GM12878 (cell line): ENCODE measurements at regions of chr11 and their contacts with region 1.

Region 1: DNA sequence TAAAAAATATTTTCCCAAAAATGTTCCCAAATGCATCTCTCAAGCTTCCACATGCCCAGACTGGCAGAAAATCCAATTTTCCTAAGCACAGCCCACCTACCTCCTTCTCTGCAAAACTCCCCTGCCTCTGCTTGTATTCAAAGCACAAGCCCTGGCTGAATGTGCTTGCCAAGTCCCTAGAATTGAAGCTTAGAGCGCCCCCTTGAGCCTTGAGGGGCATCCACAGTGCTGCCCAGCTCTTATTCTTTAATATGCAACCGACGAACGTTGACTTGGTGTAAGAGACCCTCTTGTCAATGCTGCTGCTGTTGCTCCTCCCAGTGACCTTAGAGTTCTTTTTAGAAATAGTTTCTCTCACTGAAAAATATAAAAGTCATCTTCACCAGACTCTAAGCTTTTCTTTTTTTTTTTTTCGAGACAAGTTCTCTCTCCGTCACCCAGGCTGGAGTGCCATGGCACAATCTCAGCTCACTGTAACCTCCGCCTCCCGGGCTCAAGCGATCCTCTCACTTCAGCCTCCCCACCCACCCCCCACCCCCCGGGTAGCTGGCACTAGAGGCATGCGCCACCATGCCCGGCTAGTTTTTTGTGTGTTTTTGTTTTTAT is 63.5 kb upstream of the CAPRIN1 start:
- DNase-seq: no peak
- ATAC-seq: peak; percentile 96
- H3K4me3 ChIP-seq: no peak overlapping the region
- H3K27ac ChIP-seq: no peak overlapping the region
- H3K4me1 ChIP-seq: no peaks in the 10 kb centered on the region
- H3K27me3 ChIP-seq: no peaks in the 10 kb centered on the region
- CTCF ChIP-seq: peak; percentile 74 to 77 (median 76)
- EP300 ChIP-seq: no peak
- POLR2A ChIP-seq: no peak
- RAD21 ChIP-seq: peak; percentile 85

Region 2: DNA sequence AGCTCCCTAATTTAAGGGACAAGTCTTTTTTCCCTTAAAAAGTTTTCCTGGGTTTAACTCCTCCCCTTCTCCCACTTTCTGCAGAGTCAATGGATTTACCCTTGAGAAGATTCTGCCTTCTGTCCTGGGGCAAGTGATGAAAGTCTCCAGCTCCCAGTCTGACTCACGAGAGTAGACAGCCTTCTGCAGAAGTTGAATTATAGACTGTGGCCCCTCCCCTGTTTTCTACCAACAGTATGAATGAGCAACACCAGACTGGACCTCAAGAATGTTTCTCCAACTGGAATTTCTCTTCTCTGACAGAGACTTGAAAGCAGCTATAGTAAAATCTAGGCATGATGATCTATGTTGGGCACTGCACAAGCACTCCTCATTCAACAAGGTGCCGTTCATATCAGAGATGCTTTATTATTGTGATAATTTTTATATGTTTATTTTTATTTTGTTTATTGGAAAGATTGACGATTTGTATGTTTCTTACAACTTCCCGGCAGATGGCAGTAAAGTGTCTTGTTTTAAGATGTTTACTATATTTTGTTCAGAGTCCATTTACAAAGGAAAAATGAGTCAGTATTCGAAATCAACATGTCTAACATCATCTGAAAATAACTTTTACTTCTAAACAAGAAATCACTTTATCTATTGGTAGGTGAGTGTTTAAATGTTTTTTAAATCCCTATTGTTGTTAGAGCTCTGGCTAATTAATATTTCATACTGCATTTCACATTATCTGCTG is 152.8 kb before region 1 on chr11:
- CTCF ChIA-PET with region 1: interaction called, 17 read pairs
- POLR2A ChIA-PET with region 1: no interaction called
- RAD21 ChIA-PET with region 1: interaction called, 3 read pairs
- SMC1A ChIA-PET with region 1: interaction called, 3 read pairs
- in situ Hi-C with region 1: no loop called
- intact Hi-C with region 1: no loop called
- DNase-seq: peak; percentile 3
- ATAC-seq: 0 out of 3 replicates have a peak, but pooled peaks have one; percentile 27
- H3K4me3 ChIP-seq: no peak overlapping the region
- H3K27ac ChIP-seq: no peak overlapping the region
- H3K4me1 ChIP-seq: no peaks in the 10 kb centered on the region
- H3K27me3 ChIP-seq: 0 out of 4 replicates have a peak, but pooled peaks cover 0 to 2% of the 10 kb centered on the region in 2 experiments
- CTCF ChIP-seq: peak in 1 of 3 experiments; percentile 17; a peak in 2 of 6 replicates
- EP300 ChIP-seq: no peak
- POLR2A ChIP-seq: no peak
- RAD21 ChIP-seq: peak; percentile 47

Region 3: GRCh38 chr11:33857933-33858371 is 130.1 kb before region 1 on chr11:
- CTCF ChIA-PET with region 1: interaction called, 70 read pairs
- POLR2A ChIA-PET with region 1: no interaction called
- RAD21 ChIA-PET with region 1: interaction called, 29 read pairs
- SMC1A ChIA-PET with region 1: interaction called, 20 read pairs
- in situ Hi-C with region 1: no loop called
- intact Hi-C with region 1: loop called (anchors 1 kb)
- DNase-seq: peak; percentile 32
- ATAC-seq: peak; percentile 99
- H3K4me3 ChIP-seq: no peak overlapping the region
- H3K27ac ChIP-seq: no peak overlapping the region
- H3K4me1 ChIP-seq: no peaks in the 10 kb centered on the region
- H3K27me3 ChIP-seq: peaks cover 0 to 2% of the 10 kb centered on the region in 2 experiments; a peak in 1 of 4 replicates
- CTCF ChIP-seq: peak; percentile 85 to 94 (median 88); a peak in 5 of 6 replicates
- EP300 ChIP-seq: no peak
- POLR2A ChIP-seq: no peak
- RAD21 ChIP-seq: peak; percentile 100

Region 4: GRCh38 chr11:33881651-33882503 is 106.2 kb before region 1 on chr11:
- CTCF ChIA-PET with region 1: interaction called, 10 read pairs
- POLR2A ChIA-PET with region 1: no interaction called
- RAD21 ChIA-PET with region 1: no interaction called
- SMC1A ChIA-PET with region 1: interaction called, 3 read pairs
- in situ Hi-C with region 1: no loop called
- intact Hi-C with region 1: no loop called
- DNase-seq: no peak
- ATAC-seq: no peak
- H3K4me3 ChIP-seq: no peak overlapping the region
- H3K27ac ChIP-seq: no peak overlapping the region
- H3K4me1 ChIP-seq: peaks cover 6% of the 10 kb centered on the region; the same call in 1 of the 2 replicates
- H3K27me3 ChIP-seq: no peaks in the 10 kb centered on the region
- CTCF ChIP-seq: no peak
- EP300 ChIP-seq: no peak
- POLR2A ChIP-seq: no peak
- RAD21 ChIP-seq: no peak

Region 5: GRCh38 chr11:33976495-33977199 is 11.4 kb before region 1 on chr11:
- CTCF ChIA-PET with region 1: interaction called, 19 read pairs
- POLR2A ChIA-PET with region 1: no interaction called
- RAD21 ChIA-PET with region 1: interaction called, 4 read pairs
- SMC1A ChIA-PET with region 1: interaction called, 11 read pairs
- in situ Hi-C with region 1: no loop called
- intact Hi-C with region 1: no loop called
- DNase-seq: no peak
- ATAC-seq: no peak
- H3K4me3 ChIP-seq: no peak overlapping the region
- H3K27ac ChIP-seq: no peak overlapping the region
- H3K4me1 ChIP-seq: no peaks in the 10 kb centered on the region
- H3K27me3 ChIP-seq: no peaks in the 10 kb centered on the region; a peak in 2 of 4 replicates
- CTCF ChIP-seq: no peak
- EP300 ChIP-seq: no peak
- POLR2A ChIP-seq: no peak
- RAD21 ChIP-seq: no peak

Region 6: GRCh38 chr11:34021977-34022735 is 34.1 kb after region 1 on chr11:
- CTCF ChIA-PET with region 1: no interaction called
- POLR2A ChIA-PET with region 1: no interaction called
- RAD21 ChIA-PET with region 1: no interaction called
- SMC1A ChIA-PET with region 1: no interaction called
- in situ Hi-C with region 1: no loop called
- intact Hi-C with region 1: no loop called
- DNase-seq: no peak
- ATAC-seq: no peak
- H3K4me3 ChIP-seq: no peak overlapping the region
- H3K27ac ChIP-seq: no peak overlapping the region
- H3K4me1 ChIP-seq: no peaks in the 10 kb centered on the region
- H3K27me3 ChIP-seq: no peaks in the 10 kb centered on the region
- CTCF ChIP-seq: no peak
- EP300 ChIP-seq: no peak
- POLR2A ChIP-seq: no peak
- RAD21 ChIP-seq: no peak